ENCODE measurements at regions of chr1 and their contacts with region 1.

Region 1: DNA sequence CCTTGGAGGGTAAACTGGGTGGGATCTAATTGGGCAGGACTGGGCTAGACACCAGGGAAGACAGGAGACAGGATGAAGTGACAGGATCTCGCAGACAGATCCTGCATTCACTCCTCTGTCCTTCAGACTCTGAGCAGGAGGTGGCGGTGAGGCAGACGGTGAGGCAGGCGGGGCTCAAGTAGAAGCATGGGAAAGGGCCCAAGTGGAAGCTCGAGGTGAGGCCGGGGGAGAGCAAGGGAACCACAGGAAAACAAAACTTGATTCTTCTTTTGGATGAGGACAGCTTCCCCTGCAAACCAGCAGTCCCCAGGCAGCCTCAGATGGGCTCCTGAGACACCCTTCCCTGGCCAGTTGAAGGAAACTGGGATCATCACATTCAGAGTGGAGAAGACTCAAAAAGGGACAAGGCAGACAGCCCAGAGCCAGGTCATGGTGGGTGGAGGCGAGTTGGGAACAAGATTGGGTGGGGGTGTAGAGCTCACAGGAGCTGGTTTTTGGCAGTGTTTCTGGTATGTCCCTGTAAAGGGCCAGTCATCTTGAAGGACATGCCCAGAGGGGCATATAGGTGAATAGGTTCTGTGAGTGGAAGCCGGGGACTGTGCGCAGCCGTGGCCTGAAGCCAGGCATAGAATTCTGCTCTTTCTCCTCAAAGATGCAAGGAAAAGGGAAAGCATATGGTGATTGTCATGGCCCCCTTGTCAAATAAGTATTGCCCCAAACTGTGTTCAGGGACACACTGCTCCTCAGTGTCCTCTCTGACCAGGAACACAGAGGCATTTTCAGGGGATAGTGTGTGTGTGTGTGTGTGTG is 18.0 kb downstream of the INKA2 start:
- DNase-seq: no peak
- ATAC-seq: peak in 1 of 2 donors; percentile 9

Region 2: GRCh38 chr1:111603979-111604378 is 117.2 kb before region 1 on chr1:
- intact Hi-C with region 1: no loop called
- DNase-seq: peak; percentile 28
- ATAC-seq: peak; percentile 63 to 86

Region 3: DNA sequence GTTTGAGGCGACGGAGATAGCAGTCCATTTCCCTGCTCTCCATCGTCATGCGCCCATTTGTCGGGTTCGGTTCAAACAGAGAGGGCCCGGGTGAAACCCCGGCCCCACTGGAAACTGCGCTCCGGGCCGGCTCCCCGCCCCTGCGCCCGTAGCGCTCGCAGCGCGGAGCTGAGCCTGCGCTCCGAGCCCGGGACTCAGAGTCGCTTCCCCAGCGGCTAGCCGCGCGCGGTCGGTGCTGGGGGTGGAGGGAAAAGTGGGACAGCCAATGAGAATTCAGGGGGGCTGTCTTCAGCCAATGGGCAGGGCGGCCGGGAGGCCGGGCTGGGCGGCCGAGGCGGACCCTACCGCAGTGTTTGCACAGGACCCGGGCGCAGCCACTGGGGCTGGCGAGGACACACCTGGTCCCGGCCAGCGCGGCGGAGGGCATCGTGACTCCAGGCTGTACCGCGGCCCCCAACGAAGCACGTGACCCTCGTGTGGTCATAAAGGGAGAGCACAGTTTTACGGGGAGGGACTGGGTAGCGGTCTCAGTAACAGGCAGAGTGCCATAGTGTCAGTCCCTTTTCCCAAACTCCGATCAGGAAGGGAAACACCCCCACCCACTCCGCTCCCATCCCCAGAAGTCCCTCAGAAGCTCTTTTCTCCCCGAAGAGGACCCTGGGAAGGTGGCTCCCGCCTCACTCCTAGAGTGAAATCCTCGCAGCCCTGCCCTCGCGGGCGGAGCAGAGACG is 18.2 kb after region 1 on chr1 and contains the start of gene INKA2:
- intact Hi-C with region 1: loop called in 1 of 2 experiments (anchors 2 kb)
- DNase-seq: peak; percentile 91
- ATAC-seq: peak; percentile 82 to 85
- total RNA-seq, gene INKA2: 18.4 to 31.7 TPM

Region 4: GRCh38 chr1:111755331-111756123 is 34.3 kb after region 1 on chr1 and contains the start of gene DDX20:
- intact Hi-C with region 1: loop called in 1 of 2 experiments (anchors 5 kb)
- DNase-seq: peak; percentile 94
- ATAC-seq: peak; percentile 97 to 98
- total RNA-seq, gene DDX20: 7.8 TPM